ENCODE measurements at regions of chr16 and their contacts with region 1.

Region 1: DNA sequence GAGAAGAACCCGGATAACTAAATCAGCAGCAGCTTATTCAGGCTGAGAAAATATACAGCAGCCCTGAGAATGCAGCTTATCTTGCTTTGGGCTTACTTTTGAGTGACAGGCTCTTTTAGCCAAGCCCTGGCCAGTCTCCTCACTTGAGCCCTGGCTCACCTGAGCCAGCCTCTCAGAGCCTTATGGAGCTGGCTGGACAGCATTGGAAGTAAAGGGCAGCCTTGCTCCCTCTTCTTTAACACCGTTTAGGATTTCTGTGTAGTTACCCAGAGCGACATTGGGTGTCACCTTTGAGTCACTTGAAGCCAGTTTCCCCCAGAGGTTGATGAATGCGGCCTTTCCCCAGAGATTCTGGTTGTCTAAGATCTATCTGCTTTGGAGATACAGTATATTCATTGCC is 7.7 kb upstream of the NPIPB2 start:
- DNase-seq: peak; percentile 73
- ATAC-seq: peak; percentile 97
- H3K4me3 ChIP-seq: no peak overlapping the region
- H3K27ac ChIP-seq: no peak overlapping the region
- H3K4me1 ChIP-seq: peaks cover 25% of the 10 kb centered on the region; the same call in 1 of the 2 replicates
- H3K27me3 ChIP-seq: peaks cover 0 to 12% of the 10 kb centered on the region in 2 experiments; a peak in 2 of 5 replicates
- CTCF ChIP-seq: peak; percentile 93
- EP300 ChIP-seq: 0 out of 4 replicates have a peak, but pooled peaks of 1 of the 2 experiments have one; percentile 19
- POLR2A ChIP-seq: no peak
- RAD21 ChIP-seq: peak; percentile 77

Region 2: GRCh38 chr16:11915644-11916523 is 33.6 kb before region 1 on chr16 and contains the start of gene GSPT1:
- CTCF ChIA-PET with region 1: no interaction called
- POLR2A ChIA-PET with region 1: interaction called, 4 read pairs
- in situ Hi-C with region 1: no loop called
- intact Hi-C with region 1: loop called (anchors 1 kb)
- DNase-seq: peak; percentile 99
- ATAC-seq: peak; percentile 92
- H3K4me3 ChIP-seq: peak within 1 kb of the TSS; percentile 74 to 98 (median 97)
- H3K27ac ChIP-seq: peak within 1 kb of the TSS; percentile 94
- H3K4me1 ChIP-seq: peaks cover 48% of the 10 kb centered on the region
- H3K27me3 ChIP-seq: no peaks in the 10 kb centered on the region; a peak in 1 of 5 replicates
- CTCF ChIP-seq: peak; percentile 52
- EP300 ChIP-seq: peak; percentile 8 to 53; a peak in 1 of 4 replicates
- POLR2A ChIP-seq: peak; percentile 80 to 97
- RAD21 ChIP-seq: peak; percentile 52
- total RNA-seq, gene GSPT1: 316 and 449 TPM in 2 replicates

Region 3: DNA sequence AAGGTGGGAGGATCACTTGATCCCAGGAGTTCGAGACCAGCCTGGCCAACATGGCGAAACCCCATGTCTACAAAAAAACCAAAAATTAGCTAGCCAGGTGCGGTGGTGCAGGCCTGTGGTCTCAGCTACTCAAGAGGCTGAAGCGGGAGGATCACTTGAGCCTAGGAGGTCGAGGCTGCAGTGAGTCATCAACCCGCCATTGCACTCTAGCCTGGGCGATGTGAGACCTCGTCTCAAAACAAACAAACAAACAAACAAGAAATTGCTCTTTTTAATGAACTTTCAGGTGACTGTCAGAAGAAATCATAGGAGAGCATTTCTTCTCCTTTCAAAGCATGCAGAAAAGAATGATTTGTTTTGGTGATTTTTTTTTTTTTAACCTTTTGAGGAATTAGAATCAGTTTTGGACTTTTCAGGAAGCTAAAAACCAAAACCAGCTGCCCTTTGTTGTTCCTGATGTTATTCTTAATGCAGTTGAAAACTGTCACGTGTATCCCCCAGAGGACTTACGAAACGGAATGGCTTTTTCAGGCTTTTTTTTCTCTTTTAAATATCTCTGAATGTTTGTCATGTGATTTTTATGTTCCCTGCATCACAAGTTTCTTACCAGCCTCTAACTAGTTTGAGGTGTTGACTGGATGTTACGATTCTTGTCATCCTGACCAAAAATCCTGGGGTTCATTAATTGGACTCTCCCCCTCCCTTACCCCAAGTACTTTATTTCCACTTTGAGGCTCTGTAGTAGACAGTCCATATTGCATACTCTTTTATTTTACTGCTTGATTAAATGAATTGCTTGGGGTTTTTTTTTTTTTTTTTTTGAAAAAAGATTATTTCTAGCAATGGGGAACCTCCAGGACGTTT is 61.1 kb after region 1 on chr16:
- CTCF ChIA-PET with region 1: no interaction called
- POLR2A ChIA-PET with region 1: no interaction called
- in situ Hi-C with region 1: no loop called
- intact Hi-C with region 1: no loop called
- DNase-seq: no peak
- ATAC-seq: no peak
- H3K4me3 ChIP-seq: no peak overlapping the region
- H3K27ac ChIP-seq: no peak overlapping the region
- H3K4me1 ChIP-seq: peaks cover 7% of the 10 kb centered on the region
- H3K27me3 ChIP-seq: no peaks in the 10 kb centered on the region
- CTCF ChIP-seq: no peak
- EP300 ChIP-seq: no peak
- POLR2A ChIP-seq: no peak
- RAD21 ChIP-seq: no peak

Measured in HepG2 (cell line).